ENCODE measurements at regions of chr9 and their contacts with region 1.

Region 1: GRCh38 chr9:15552636-15553527 is at the start of gene CCDC171:
- DNase-seq: peak; percentile 90
- ATAC-seq: peak; percentile 91
- H3K4me3 Mint-ChIP-seq: peak within 1 kb of the TSS; percentile 86
- H3K27ac Mint-ChIP-seq: peak within 1 kb of the TSS; percentile 85
- H3K4me1 Mint-ChIP-seq: peaks cover 13% of the 10 kb centered on the region
- H3K27me3 Mint-ChIP-seq: peaks cover 11% of the 10 kb centered on the region
- total RNA-seq, gene CCDC171: 1.9 TPM

Region 2: DNA sequence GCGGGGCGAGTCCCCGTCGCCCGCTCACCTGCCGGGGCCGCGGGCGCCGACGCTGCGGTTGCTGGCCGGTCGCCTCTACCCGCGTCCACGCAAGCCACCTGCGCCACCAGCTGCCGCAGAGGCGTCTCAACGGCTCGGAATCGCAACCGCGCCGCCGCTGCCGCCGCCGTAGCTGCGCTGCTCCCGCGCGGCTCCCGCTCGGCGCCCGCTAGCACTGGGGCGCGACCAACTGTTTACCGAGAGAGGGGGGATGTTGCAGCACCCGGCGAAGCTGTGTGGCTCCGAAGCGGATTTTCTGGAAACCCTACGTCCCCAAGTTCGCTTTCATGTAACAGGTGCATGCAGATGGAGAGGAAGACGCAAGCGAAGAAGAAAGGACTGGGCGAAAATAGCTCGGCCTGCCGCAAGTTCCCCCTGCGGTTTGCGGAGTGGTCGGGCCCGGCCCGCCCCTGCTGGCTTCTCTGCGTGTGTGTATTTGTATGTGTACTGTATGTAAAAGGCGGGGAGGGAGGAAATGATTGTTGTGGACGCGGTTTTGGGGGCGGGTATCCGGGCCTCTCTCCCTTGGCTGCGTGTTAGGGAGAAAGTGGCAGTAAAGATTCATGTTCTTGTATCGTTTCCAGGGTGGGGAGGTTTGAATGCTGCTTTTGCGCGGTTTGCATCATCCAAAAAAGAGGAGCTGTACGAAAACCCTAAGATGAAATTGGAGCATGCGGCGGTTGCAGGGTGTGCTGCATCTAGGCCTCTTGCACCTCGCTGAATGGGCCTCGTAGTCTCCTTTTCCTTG is 41.9 kb before region 1 on chr9 and contains the start of gene PSIP1:
- CTCF ChIA-PET with region 1: interaction called, 13 read pairs
- POLR2A ChIA-PET with region 1: interaction called, 40 read pairs
- DNase-seq: peak; percentile 93
- ATAC-seq: peak; percentile 88
- H3K4me3 Mint-ChIP-seq: peak within 1 kb of the TSS; percentile 89
- H3K27ac Mint-ChIP-seq: peak within 1 kb of the TSS; percentile 100
- H3K4me1 Mint-ChIP-seq: peaks cover 51% of the 10 kb centered on the region
- H3K27me3 Mint-ChIP-seq: peaks cover 7% of the 10 kb centered on the region
- total RNA-seq, gene PSIP1: 132 to 138 TPM

Region 3: DNA sequence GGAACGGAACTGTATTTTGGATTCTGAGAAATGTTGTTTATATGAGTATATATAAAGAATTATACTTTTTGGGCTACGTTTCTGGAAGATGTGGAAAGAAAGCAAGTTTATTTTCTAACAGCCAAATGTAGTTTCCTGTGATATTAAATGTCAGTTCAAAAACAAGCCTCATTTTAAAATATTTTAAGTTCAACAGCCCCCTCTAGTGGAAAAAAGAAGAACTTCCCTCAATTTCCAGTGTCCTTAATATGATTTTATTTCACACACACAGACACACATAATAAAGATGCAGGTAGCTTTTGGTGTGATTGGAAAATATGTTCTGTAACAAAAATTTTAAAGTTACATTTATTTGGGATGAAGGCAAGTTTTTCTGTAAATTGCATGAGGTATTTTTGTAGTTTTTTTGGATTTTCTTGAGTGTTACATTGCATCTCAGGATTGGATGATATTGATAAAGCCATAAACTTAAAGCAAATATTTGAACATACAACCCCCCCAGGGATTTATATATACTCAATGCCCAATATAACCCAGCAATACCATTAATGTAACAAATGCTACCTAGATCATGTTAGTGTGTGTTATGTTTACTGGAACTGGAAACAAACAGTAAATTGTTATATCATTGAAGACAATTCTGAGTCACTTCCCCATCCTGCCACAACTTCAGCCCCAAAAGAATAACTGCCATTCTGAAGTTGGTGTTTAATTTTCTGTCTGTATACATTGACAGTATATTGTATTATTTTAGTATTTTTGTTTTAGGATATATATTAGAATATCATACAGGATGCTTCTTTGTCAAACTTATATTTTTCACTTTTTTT is 54.0 kb after region 1 on chr9:
- CTCF ChIA-PET with region 1: interaction called, 34 read pairs
- POLR2A ChIA-PET with region 1: interaction called, 4 read pairs
- DNase-seq: peak; percentile 28
- ATAC-seq: peak; percentile 42
- H3K4me3 Mint-ChIP-seq: no peak overlapping the region
- H3K27ac Mint-ChIP-seq: no peak overlapping the region
- H3K4me1 Mint-ChIP-seq: peaks cover 6% of the 10 kb centered on the region
- H3K27me3 Mint-ChIP-seq: no peaks in the 10 kb centered on the region